Activated CD4-positive, alpha-beta T cell treated with anti-CD3 and anti-CD28 coated beads, Interleukin-2, amount 10 ng/mL, durations not matched to agents 24 days and 14 days (primary cell): ENCODE measurements at regions of chr2 and their contacts with region 1.

Region 1: DNA sequence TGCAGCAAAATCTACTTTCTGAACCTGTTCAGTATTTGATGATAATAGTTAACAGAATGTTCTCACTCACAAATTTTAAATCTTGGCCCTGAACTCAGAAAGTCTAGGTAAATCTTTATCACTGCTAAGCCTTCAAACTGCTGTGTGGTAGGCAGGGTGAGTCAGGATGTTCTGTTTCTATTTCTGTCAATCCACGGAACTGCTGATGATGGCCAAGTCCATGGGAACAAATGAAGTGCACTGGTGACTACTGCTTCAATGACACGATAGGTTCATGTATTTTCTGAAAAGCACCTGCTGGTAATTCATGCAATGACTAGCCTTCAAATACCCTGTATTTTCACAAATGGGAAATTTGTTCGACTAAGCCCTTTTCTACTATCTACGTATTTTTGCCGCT is 14.2 kb downstream of the NIFK start:
- DNase-seq: no peak
- H3K4me3 Mint-ChIP-seq: peak overlapping the region; percentile 3
- H3K27ac Mint-ChIP-seq: peak overlapping the region; percentile 82
- H3K4me1 Mint-ChIP-seq: peaks cover 15% of the 10 kb centered on the region
- H3K27me3 Mint-ChIP-seq: no peaks in the 10 kb centered on the region

Region 2: GRCh38 chr2:121400201-121400600 is 322.3 kb before region 1 on chr2:
- intact Hi-C with region 1: loop called (anchors 1 kb)
- DNase-seq: no peak
- H3K4me3 Mint-ChIP-seq: no peak overlapping the region
- H3K27ac Mint-ChIP-seq: no peak overlapping the region
- H3K4me1 Mint-ChIP-seq: peaks cover 2% of the 10 kb centered on the region
- H3K27me3 Mint-ChIP-seq: no peaks in the 10 kb centered on the region

Region 3: GRCh38 chr2:121596221-121597080 is 126.0 kb before region 1 on chr2:
- intact Hi-C with region 1: loop called (anchors 1 kb)
- DNase-seq: peak; percentile 70
- H3K4me3 Mint-ChIP-seq: peak overlapping the region; percentile 67
- H3K27ac Mint-ChIP-seq: peak overlapping the region; percentile 88
- H3K4me1 Mint-ChIP-seq: peaks cover 41% of the 10 kb centered on the region
- H3K27me3 Mint-ChIP-seq: no peaks in the 10 kb centered on the region

Region 4: GRCh38 chr2:121810959-121811853 is 88.7 kb after region 1 on chr2:
- intact Hi-C with region 1: no loop called
- DNase-seq: peak; percentile 68
- H3K4me3 Mint-ChIP-seq: no peak overlapping the region
- H3K27ac Mint-ChIP-seq: no peak overlapping the region
- H3K4me1 Mint-ChIP-seq: no peaks in the 10 kb centered on the region
- H3K27me3 Mint-ChIP-seq: peaks cover 2% of the 10 kb centered on the region

Region 5: GRCh38 chr2:122055521-122055931 is 333.0 kb after region 1 on chr2:
- intact Hi-C with region 1: no loop called
- DNase-seq: no peak
- H3K4me3 Mint-ChIP-seq: no peak overlapping the region
- H3K27ac Mint-ChIP-seq: no peak overlapping the region
- H3K4me1 Mint-ChIP-seq: no peaks in the 10 kb centered on the region
- H3K27me3 Mint-ChIP-seq: no peaks in the 10 kb centered on the region